Ascending aorta (tissue), 2 donors: ENCODE measurements at regions of chr10 and their contacts with region 1.

Region 1: DNA sequence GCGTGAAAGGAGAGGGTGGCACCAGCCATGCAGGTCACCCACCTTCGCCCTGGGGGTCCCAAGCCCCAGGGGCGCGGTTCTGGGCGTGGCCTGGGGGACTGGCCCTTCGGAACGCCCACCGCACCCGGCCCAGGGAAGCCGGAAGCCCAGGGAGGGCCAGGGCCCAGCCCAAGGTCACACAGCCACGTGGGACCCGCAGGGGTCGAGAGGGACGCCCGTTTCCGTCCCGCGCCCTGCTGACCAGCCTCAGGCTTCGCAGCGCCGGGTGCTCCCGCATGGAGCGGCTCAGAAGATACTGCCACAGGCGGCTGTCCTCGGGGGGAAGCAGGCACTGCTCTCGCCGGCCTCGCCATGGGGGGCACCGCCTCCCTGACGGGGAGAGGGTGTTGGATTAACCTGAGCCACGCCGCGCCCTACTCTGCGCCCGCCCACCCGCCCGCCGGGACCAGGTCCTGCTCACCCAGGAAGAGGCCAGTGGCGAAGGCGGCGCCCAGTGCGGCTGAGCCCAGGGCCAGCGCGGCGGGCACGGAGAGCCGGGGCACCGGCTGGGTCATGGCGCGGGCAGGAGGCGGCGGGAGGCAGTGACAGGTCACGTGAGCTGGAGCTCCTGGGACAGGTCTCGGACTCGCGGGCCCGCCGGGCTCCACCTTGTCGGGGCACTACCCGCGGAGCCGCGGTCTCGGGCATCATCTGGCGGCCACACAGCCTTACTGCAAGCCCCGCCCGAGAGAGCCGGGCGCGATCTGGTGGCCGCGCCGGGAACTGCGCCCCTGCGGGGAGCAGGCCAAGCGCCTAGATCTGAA is at the start of gene COMTD1:
- DNase-seq: peak; percentile 68 to 96
- H3K4me3 ChIP-seq: peak within 1 kb of the TSS; percentile 79 to 80
- H3K27ac ChIP-seq: peak within 1 kb of the TSS; percentile 81 to 90
- H3K4me1 ChIP-seq: peaks cover 0 to 2% of the 10 kb centered on the region in 2 donors
- H3K27me3 ChIP-seq: no peaks in the 10 kb centered on the region
- CTCF ChIP-seq: peak; percentile 100
- total RNA-seq, gene COMTD1: 85.5 TPM

Region 2: DNA sequence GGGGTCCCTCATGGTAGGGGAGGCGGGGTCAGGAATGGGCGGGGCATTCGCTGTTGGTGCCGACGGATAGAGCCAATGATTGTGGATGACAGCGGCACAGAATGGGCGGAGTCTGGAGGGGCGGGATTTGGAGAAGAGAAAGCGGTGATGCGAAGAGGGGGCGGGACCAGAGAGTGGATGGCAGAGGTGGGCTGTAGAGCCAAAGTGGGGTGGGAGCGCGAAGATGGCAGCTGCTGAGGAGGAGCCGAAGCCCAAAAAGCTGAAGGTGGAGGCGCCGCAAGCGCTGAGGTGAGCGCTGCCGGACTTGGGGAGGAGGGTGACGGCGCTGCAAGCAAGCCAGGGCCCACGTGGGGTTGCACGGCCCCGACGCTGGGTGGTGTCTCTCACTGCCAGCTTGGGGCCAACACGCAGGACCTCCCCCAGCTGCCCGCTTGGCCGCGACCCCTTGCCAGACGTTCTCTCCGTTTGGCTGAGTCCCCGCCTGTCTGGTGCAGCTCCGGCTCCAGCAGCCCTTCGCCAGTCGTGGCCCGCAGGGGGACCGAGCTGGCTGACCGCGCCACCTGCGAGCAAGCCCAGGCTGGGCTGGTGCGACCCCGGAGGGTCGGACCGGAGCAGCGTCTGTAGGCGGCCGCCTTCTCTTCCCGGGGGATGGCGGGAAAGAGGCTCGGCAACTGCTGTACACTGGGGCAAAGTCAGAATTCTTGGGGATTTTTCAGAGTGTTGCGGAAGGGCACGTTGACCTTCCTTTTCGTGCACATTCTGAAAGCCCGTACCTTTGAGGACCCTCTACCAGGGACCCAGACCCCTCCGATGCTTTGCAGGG is 1084.3 kb before region 1 on chr10 and contains the start of gene ADK:
- intact Hi-C with region 1: loop called (anchors 10 kb)
- DNase-seq: peak; percentile 98 to 100
- H3K4me3 ChIP-seq: peak within 1 kb of the TSS; percentile 82 to 96
- H3K27ac ChIP-seq: peak within 1 kb of the TSS; percentile 84
- H3K4me1 ChIP-seq: peaks cover 8 to 29% of the 10 kb centered on the region in 2 donors
- H3K27me3 ChIP-seq: no peaks in the 10 kb centered on the region
- CTCF ChIP-seq: peak; percentile 24 to 63 (median 41)
- total RNA-seq, gene ADK: 2.4 TPM

Region 3: GRCh38 chr10:74262856-74263255 is 972.7 kb before region 1 on chr10:
- intact Hi-C with region 1: loop called (anchors 2 kb)
- DNase-seq: no peak
- H3K4me3 ChIP-seq: no peak overlapping the region
- H3K27ac ChIP-seq: no peak overlapping the region
- H3K4me1 ChIP-seq: no peaks in the 10 kb centered on the region
- H3K27me3 ChIP-seq: no peaks in the 10 kb centered on the region
- CTCF ChIP-seq: no peak

Region 4: DNA sequence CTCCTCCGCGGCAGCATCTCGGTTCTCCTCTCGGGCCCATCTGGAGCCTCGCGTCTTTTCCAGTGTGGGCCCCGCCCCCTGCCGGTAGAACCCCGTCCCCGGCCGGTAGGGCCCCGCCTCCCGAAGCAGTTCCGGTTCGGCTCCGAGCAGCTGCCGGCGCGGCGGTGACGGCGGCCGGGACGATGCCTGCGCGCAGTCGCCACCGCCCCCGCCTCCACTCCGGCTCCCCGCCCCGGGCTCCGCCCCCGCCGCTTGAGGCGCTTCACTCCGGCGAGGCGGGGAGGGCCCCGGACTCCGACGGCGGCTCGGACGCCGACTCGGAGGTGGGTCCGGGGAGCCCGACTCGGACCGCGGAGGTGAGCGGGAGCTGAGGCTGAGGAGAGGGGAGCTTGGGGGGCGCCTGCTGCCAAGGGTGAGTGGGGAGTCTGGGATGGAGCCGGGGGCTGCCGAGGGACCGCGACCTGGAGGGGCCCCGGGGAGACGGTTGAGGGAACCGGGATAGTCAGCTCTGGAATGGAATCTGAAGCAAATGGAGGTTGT is 124.1 kb before region 1 on chr10 and contains the start of gene SAMD8:
- intact Hi-C with region 1: loop called (anchors 1 kb)
- DNase-seq: peak; percentile 93 to 99
- H3K4me3 ChIP-seq: peak within 1 kb of the TSS; percentile 75 to 91
- H3K27ac ChIP-seq: peak within 1 kb of the TSS; percentile 97 to 98
- H3K4me1 ChIP-seq: peaks cover 0 to 12% of the 10 kb centered on the region in 2 donors
- H3K27me3 ChIP-seq: no peaks in the 10 kb centered on the region
- CTCF ChIP-seq: peak in 2 of 3 experiments; percentile 14 to 34
- total RNA-seq, gene SAMD8: 16.5 TPM

Region 5: GRCh38 chr10:75210282-75211006 is 25.1 kb before region 1 on chr10 and contains the start of gene VDAC2:
- intact Hi-C with region 1: loop called (anchors 1 kb)
- DNase-seq: peak; percentile 57 to 94
- H3K4me3 ChIP-seq: peak within 1 kb of the TSS; percentile 84 to 94
- H3K27ac ChIP-seq: peak within 1 kb of the TSS; percentile 98 to 100
- H3K4me1 ChIP-seq: peaks cover 10 to 23% of the 10 kb centered on the region in 2 donors
- H3K27me3 ChIP-seq: no peaks in the 10 kb centered on the region
- CTCF ChIP-seq: no peak
- total RNA-seq, gene VDAC2: 14.4 TPM